HepG2 (cell line): ENCODE measurements at regions of chr10 and their contacts with region 1.

Region 1: GRCh38 chr10:68331455-68332258 is at the start of gene HNRNPH3:
- DNase-seq: peak; percentile 92
- ATAC-seq: peak; percentile 91
- H3K4me3 ChIP-seq: peak within 1 kb of the TSS; percentile 90 to 98 (median 98)
- H3K27ac ChIP-seq: peak within 1 kb of the TSS; percentile 95
- H3K4me1 ChIP-seq: peaks cover 50% of the 10 kb centered on the region
- H3K27me3 ChIP-seq: no peaks in the 10 kb centered on the region; a peak in 1 of 5 replicates
- CTCF ChIP-seq: 0 out of 2 replicates have a peak, but pooled peaks have one; percentile 21
- EP300 ChIP-seq: no peak
- POLR2A ChIP-seq: peak; percentile 98 to 99
- RAD21 ChIP-seq: peak; percentile 38; the same call in 1 of the 2 replicates
- total RNA-seq, gene HNRNPH3: 46.0 and 84.5 TPM in 2 replicates

Region 2: DNA sequence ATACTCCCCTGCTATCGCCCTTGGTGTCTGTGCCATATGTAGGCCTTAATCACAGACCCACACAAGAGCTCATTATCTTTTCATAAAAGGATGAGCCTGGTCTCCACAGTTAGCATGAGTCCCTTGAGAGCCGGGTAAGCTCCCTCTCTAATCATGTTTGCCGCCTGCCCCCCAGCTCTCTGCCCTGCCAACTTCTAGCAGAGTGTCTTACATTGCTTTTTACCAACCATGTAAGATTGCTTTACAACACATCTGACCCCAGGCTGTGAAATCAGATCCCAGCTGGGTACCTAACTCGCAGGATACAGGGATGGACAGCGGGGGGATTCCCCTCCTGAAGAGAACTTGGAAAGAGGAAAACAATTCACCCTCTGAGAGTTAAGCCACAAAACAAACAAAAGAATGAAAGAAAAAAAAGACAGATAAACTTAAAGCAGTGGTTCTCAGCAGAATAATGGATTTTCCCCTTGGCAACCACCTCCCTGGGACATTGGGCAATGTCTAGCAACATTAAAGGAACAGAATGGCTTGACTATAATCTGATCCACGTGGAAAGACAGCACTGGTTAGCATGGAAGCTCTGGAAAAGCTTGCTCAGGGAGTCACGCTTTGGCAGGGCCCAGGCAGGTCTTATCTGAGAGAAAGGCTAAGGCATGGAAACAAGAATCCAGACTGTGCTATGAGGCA is 60.3 kb before region 1 on chr10:
- CTCF ChIA-PET with region 1: no interaction called
- POLR2A ChIA-PET with region 1: no interaction called
- in situ Hi-C with region 1: no loop called
- intact Hi-C with region 1: loop called (anchors 2 kb)
- DNase-seq: no peak
- ATAC-seq: no peak
- H3K4me3 ChIP-seq: no peak overlapping the region
- H3K27ac ChIP-seq: no peak overlapping the region
- H3K4me1 ChIP-seq: no peaks in the 10 kb centered on the region
- H3K27me3 ChIP-seq: no peaks in the 10 kb centered on the region
- CTCF ChIP-seq: no peak
- EP300 ChIP-seq: no peak
- POLR2A ChIP-seq: no peak
- RAD21 ChIP-seq: no peak

Region 3: GRCh38 chr10:68301790-68302502 is 29.7 kb before region 1 on chr10:
- CTCF ChIA-PET with region 1: no interaction called
- POLR2A ChIA-PET with region 1: interaction called, 10 read pairs
- in situ Hi-C with region 1: no loop called
- intact Hi-C with region 1: no loop called
- DNase-seq: peak; percentile 50
- ATAC-seq: peak; percentile 75
- H3K4me3 ChIP-seq: no peak overlapping the region
- H3K27ac ChIP-seq: no peak overlapping the region
- H3K4me1 ChIP-seq: peaks cover 41% of the 10 kb centered on the region
- H3K27me3 ChIP-seq: no peaks in the 10 kb centered on the region
- CTCF ChIP-seq: peak; percentile 67
- EP300 ChIP-seq: no peak
- POLR2A ChIP-seq: no peak
- RAD21 ChIP-seq: peak; percentile 44; the same call in 1 of the 2 replicates